Activated B cell treated with CpG ODN at 0.5 μM for 24 hours (primary cell): ENCODE measurements at regions of chr3 and their contacts with region 1.

Region 1: GRCh38 chr3:36944012-36944640 is 728 bp downstream of the TRANK1 start:
- DNase-seq: no peak
- ATAC-seq: peak; percentile 45
- H3K4me3 Mint-ChIP-seq: peak overlapping the region; percentile 87
- H3K27ac Mint-ChIP-seq: peak overlapping the region; percentile 68
- H3K4me1 Mint-ChIP-seq: peaks cover 26% of the 10 kb centered on the region
- H3K27me3 Mint-ChIP-seq: no peaks in the 10 kb centered on the region
- CTCF ChIP-seq: no peak

Region 2: DNA sequence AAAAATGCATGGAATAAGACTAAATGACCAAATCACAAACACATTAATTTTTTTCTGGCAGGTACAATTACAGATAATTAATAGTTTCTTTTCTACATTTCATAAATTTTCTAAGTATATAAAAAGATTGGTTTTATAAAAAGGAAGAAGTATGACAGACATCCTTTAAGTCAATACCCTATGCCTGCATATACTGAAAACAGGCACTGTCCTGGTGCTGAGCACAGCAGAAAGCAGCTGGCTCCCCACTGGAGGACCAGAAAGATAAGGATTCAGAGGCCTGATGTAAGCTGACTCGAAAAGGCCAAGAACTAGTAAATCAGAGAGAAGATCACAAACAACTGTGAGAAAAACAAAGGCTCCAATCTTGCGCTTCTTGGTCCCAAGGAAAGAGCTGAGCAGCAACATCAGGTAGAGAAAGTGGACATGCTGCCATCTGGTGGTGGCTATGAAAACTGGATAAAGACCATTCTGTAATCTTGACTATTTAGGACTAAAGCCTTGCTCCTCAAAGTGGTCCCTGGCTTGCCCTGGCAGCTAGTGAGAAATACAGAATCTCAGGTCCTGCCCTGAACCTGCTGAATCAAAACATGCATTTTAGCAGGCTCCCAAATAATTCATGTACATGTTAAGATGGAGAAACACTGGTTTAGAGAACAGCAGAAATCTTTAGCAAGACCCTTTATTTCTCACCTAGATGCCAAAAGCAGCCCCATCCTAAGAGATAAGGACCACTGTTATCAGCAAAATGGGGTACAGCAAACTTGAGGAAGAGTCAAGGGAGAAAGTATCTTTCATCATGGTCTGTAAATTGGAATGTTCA is 75.3 kb before region 1 on chr3:
- CTCF ChIA-PET with region 1: interaction called, 8 read pairs
- POLR2A ChIA-PET with region 1: interaction called, 4 read pairs
- intact Hi-C with region 1: loop called (anchors 1 kb)
- DNase-seq: no peak
- ATAC-seq: peak; percentile 88
- H3K4me3 Mint-ChIP-seq: no peak overlapping the region
- H3K27ac Mint-ChIP-seq: peak overlapping the region; percentile 59
- H3K4me1 Mint-ChIP-seq: peaks cover 23% of the 10 kb centered on the region
- H3K27me3 Mint-ChIP-seq: no peaks in the 10 kb centered on the region
- CTCF ChIP-seq: peak; percentile 87

Region 3: DNA sequence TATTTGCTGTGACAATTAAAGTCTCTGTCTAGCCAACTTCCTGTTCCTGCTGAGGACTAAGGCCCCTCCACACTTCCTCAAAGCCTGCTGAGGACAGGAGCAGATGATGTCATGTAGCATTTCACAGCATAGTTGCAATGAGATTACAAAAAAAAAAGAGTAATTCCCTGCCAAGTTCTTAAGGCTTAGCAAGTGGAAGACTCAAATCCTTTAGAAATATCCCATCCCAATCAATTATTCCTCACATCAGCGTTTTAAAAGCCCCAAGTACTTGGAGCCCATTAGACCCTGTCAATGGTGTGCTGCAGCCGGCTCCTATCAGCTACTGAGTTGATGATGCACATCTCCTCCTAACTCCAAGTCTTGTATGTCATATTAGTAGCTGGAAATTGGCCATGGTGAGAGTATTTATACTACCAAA is 51.0 kb before region 1 on chr3:
- CTCF ChIA-PET with region 1: interaction called, 5 read pairs
- POLR2A ChIA-PET with region 1: interaction called, 37 read pairs
- intact Hi-C with region 1: loop called (anchors 1 kb)
- DNase-seq: no peak
- ATAC-seq: peak; percentile 35
- H3K4me3 Mint-ChIP-seq: peak overlapping the region; percentile 78
- H3K27ac Mint-ChIP-seq: peak overlapping the region; percentile 97
- H3K4me1 Mint-ChIP-seq: peaks cover 94% of the 10 kb centered on the region
- H3K27me3 Mint-ChIP-seq: no peaks in the 10 kb centered on the region
- CTCF ChIP-seq: no peak

Region 4: DNA sequence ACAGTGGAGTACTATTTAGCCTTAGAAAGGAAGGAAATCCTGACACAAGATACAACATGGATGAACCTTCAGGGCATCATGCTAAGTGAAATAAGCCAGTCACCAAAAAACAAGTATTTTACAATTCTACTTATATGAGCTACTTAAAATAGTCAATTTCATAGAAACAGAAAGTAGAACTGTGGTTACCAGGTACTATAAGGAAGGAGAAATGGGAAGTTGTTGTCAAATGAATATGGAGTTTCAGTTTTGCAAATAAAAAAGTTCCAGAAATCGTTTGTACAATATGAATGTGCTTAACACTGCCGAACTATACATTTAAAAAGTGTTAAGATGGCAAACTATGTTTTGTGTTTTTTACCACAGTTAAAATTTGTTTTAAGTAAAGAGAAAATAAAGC is 26.1 kb before region 1 on chr3:
- CTCF ChIA-PET with region 1: interaction called, 6 read pairs
- POLR2A ChIA-PET with region 1: interaction called, 31 read pairs
- intact Hi-C with region 1: loop called (anchors 1 kb)
- DNase-seq: no peak
- ATAC-seq: peak; percentile 67
- H3K4me3 Mint-ChIP-seq: peak overlapping the region; percentile 83
- H3K27ac Mint-ChIP-seq: peak overlapping the region; percentile 91
- H3K4me1 Mint-ChIP-seq: peaks cover 62% of the 10 kb centered on the region
- H3K27me3 Mint-ChIP-seq: no peaks in the 10 kb centered on the region
- CTCF ChIP-seq: no peak

Region 5: GRCh38 chr3:36969540-36970432 is 25.7 kb after region 1 on chr3:
- CTCF ChIA-PET with region 1: interaction called, 3 read pairs
- POLR2A ChIA-PET with region 1: interaction called, 9 read pairs
- intact Hi-C with region 1: loop called (anchors 1 kb)
- DNase-seq: peak; percentile 26
- ATAC-seq: peak; percentile 99
- H3K4me3 Mint-ChIP-seq: peak overlapping the region; percentile 39
- H3K27ac Mint-ChIP-seq: peak overlapping the region; percentile 93
- H3K4me1 Mint-ChIP-seq: peaks cover 30% of the 10 kb centered on the region
- H3K27me3 Mint-ChIP-seq: no peaks in the 10 kb centered on the region
- CTCF ChIP-seq: no peak

Region 6: GRCh38 chr3:36993326-36994283 is 49.5 kb after region 1 on chr3 and contains the start of gene MLH1:
- CTCF ChIA-PET with region 1: no interaction called
- POLR2A ChIA-PET with region 1: interaction called, 24 read pairs
- intact Hi-C with region 1: loop called (anchors 1 kb)
- DNase-seq: peak; percentile 90
- ATAC-seq: peak; percentile 86
- H3K4me3 Mint-ChIP-seq: no peak within 1 kb of the TSS
- H3K27ac Mint-ChIP-seq: no peak within 1 kb of the TSS
- H3K4me1 Mint-ChIP-seq: peaks cover 29% of the 10 kb centered on the region
- H3K27me3 Mint-ChIP-seq: no peaks in the 10 kb centered on the region
- CTCF ChIP-seq: no peak
- total RNA-seq, gene MLH1: 45.8 and 46.2 TPM in 2 replicates